PC-9 (cell line): ENCODE measurements at regions of chr17 and their contacts with region 1.

Region 1: DNA sequence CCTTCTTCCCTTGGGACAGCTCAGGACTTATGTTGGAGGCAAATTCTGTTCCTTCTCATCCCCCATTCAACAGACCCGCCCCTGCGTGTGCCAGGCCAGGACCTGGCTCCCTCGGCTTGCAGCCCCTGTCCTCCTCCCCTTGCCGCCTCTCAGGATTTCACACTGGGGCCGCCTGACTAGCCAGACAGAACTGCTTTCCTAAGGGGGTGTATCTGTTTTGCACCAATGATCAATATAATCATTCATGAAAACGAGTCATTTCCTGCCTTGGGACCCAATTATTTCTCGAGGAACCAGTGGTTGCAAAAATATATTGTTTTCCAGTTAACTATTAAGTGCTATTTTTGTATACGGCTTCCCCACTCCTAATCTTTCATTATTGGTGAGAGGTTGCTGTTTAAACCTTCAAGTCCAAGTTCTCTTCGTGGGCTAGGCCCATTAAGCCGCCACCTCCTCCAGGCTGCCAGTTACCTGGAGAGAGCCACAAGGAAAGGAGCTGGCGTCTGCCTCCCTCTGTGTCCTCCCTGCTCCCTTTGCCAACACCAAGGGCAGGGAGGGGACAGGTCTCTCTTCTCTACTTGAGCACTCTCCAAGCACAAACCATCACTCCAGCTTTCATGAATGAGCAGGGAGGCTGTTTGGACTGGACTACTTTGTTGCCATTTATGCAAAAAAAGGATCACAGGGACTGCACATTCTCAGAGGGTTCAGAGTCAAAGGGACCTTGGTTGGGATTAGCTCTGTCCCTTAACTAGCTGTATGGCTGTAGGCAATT is 8.9 kb downstream of the DCAKD start:
- DNase-seq: no peak
- H3K4me3 ChIP-seq: no peak overlapping the region
- H3K27ac ChIP-seq: no peak overlapping the region
- H3K4me1 ChIP-seq: peaks cover 7% of the 10 kb centered on the region
- H3K27me3 ChIP-seq: no peaks in the 10 kb centered on the region
- CTCF ChIP-seq: no peak

Region 2: GRCh38 chr17:43720311-43721060 is 1322.0 kb before region 1 on chr17:
- CTCF ChIA-PET with region 1: no interaction called
- POLR2A ChIA-PET with region 1: interaction called, 10 read pairs
- intact Hi-C with region 1: no loop called
- DNase-seq: peak; percentile 57 to 73
- H3K4me3 ChIP-seq: peak overlapping the region; percentile 66
- H3K27ac ChIP-seq: peak overlapping the region; percentile 98
- H3K4me1 ChIP-seq: peaks cover 61% of the 10 kb centered on the region
- H3K27me3 ChIP-seq: no peaks in the 10 kb centered on the region
- CTCF ChIP-seq: no peak

Region 3: DNA sequence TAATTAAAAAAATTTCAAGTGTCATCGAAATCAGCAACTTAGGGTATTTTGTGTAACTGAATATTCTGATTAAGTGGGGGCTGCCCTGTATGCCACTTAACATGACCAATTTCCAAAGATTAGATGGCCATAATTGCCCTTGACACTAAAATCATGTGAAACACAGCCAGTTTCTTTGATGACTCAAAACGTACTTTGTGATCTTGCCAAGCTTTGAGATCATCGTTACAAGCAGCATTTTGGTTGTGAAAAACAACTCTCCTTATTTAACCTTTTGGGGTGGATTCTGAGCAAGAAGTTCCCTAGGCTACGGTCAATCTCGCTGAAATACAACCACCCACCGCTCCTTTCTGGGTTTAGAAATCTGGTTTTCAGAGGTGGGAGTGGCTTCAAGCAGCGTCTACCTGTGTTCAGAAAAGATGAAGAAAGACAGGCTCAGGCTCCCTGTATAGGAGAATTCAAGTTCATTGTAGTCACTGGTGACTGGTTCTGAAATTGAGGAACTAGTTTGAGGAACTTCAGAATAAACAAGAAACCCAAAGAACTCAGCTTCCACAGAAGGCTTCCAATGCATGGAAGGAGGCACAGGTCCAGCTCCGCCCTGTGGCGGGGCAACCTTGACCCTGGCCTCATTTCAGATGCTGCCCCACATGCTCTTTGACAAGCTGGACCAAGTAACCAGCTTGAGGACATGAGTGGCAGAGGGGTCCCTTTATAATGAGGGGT is 264.9 kb after region 1 on chr17:
- CTCF ChIA-PET with region 1: no interaction called
- POLR2A ChIA-PET with region 1: no interaction called
- intact Hi-C with region 1: no loop called
- DNase-seq: no peak
- H3K4me3 ChIP-seq: no peak overlapping the region
- H3K27ac ChIP-seq: peak overlapping the region; percentile 24
- H3K4me1 ChIP-seq: peaks cover 45% of the 10 kb centered on the region
- H3K27me3 ChIP-seq: no peaks in the 10 kb centered on the region
- CTCF ChIP-seq: no peak